Motor neuron (in vitro differentiated cells): ENCODE measurements at regions of chr1 and their contacts with region 1.

Region 1: DNA sequence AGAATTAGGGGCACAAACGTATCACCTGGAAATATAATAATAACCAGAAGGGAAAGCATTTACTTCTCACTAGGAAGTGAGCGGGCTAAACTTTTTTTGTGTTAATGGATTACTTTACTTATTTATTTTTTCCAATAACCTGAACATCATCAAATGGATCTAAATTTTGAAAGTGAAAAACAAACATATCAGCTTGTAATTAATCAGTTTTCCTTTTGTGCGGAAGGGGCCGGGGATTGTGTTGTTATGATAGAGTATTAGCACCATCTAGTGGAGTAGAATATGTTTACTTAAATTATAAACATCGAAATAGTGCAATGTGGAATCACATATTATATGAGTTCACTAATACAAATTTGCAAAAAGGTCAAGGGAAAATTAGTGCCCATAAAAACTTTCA is 9.0 kb downstream of the CFH start:
- ATAC-seq: peak in 5 of 8 experiments; percentile 31 to 68 (median 49)
- H3K4me3 ChIP-seq: no peak overlapping the region
- H3K27ac ChIP-seq: no peak overlapping the region
- H3K4me1 ChIP-seq: no peaks in the 10 kb centered on the region

Region 2: DNA sequence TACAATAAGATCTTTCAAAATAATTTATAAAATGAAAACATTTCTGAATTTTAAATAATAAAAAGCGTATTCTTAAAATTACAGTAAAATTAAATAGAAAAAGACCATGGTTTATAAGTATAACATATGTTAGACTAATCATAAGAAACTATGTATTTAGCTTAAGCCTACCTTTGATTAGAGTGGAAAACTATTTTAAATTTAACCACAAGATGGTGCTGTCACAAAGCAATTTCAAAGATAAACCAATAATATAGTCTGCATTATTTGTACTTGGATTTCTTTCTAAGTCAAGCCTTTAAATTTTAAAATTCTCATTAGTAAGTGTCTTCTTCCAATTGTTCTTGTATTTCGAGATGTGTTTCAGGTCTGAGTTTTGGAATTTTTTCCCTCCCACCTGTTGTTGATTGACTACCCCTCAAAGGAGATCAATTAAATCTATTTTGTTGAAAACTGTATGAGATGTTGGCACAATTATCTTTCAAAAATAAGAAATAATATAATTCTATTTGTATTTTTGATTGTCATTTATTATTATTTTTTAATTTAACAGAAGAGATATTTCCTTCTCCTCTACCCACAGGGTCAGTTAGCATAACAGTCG is 512.4 kb before region 1 on chr1:
- in situ Hi-C with region 1: loop called in 5 of 9 experiments (anchors 10 to 25 kb)
- ATAC-seq: peak in 2 of 8 experiments; percentile 23 to 32
- H3K4me3 ChIP-seq: no peak overlapping the region
- H3K27ac ChIP-seq: no peak overlapping the region
- H3K4me1 ChIP-seq: no peaks in the 10 kb centered on the region

Region 3: GRCh38 chr1:196160066-196160795 is 500.6 kb before region 1 on chr1:
- in situ Hi-C with region 1: loop called in 2 of 9 experiments (anchors 25 kb)
- ATAC-seq: no peak
- H3K4me3 ChIP-seq: no peak overlapping the region
- H3K27ac ChIP-seq: no peak overlapping the region
- H3K4me1 ChIP-seq: no peaks in the 10 kb centered on the region

Region 4: DNA sequence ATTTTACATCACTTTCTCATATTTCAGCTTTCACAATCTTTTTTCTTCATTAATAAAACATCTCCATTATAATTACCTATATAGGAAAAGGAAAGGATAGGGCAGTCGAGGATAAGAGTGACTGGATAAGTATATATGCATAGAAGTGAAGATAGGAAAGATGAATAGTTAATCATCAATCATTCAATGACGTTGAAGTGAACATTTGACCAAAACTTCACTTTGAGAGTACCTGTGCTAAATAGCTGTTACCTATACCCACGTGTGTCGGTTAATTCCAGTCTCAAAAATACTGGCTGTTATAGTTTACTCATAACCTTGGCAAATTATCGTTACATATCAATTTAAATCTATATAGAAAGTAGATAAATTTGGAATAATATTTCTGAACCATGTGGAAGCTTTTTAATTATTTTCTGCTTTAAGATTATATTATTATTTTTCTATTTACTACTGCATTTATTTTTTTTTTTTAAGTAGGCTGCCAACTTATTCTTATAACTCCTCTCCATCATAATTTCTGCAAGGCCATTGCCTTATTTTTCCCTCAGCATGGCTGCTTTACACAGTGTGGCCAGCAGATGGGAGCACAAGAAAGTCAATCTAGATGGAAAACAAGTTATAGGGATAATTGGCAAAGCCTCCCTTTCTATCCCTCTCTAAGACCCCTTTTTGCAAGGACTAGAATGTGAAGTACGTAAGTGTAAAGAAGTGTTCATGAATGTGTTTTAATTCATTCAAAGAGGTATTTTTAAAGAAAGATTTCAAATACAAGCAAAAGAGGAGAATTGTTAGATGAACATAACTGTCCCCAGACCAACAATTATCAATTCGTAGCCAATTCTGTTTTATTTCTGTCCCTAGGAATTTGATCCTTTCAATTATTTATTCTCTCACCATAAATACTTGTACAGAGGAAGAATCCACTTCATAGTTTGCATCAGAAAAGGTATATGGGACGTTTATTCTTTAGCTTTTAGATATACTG is 343.0 kb before region 1 on chr1:
- in situ Hi-C with region 1: loop called in 2 of 9 experiments (anchors 10 kb)
- ATAC-seq: peak in 2 of 8 experiments; percentile 39 to 52
- H3K4me3 ChIP-seq: no peak overlapping the region
- H3K27ac ChIP-seq: no peak overlapping the region
- H3K4me1 ChIP-seq: no peaks in the 10 kb centered on the region

Region 5: GRCh38 chr1:196344453-196344852 is 316.4 kb before region 1 on chr1:
- in situ Hi-C with region 1: loop called in 3 of 9 experiments (anchors 25 kb)
- ATAC-seq: no peak
- H3K4me3 ChIP-seq: no peak overlapping the region
- H3K27ac ChIP-seq: no peak overlapping the region
- H3K4me1 ChIP-seq: peaks cover 9 to 10% of the 10 kb centered on the region in 2 donors